Endothelial cell of umbilical vein (primary cell): ENCODE measurements at regions of chr12 and their contacts with region 1.

Region 1: DNA sequence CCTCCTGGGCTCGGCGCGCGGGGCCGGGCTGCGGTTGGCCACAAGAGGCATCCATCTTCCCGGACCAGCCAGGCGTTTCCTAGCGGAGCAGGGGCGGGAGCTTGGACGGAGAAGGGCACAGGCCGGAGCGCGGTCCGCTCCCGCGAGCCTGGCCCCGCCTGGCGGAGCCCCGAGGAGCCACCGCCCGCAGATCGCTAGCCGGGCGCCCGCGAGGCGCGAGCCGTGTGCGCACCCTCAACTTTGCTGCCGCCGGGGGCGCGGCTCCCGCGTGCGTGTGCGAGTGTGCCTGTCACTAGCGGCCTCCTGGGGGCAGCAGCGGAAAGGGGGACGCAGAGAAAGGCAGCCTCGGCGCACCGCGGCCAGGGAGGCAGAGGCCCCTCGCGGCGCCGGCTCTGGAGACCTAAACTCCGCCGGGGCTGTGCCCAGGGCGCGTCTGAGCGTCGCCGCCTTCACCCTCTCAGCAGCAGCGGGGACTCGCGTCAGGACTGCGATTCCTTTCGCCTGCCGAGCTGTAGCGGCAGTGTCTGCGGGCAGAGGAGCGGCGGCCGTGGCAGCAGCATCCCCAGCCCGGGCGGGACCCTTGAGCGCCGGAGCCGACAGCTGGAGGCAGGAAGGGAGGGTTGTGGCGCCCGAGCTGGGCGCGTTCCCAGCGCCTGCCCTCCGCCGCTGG is 644 bp upstream of the SRGAP1 start:
- DNase-seq: peak; percentile 97
- H3K4me3 ChIP-seq: peak overlapping the region; percentile 56 to 70 (median 63)
- H3K27ac ChIP-seq: peak overlapping the region; percentile 55
- H3K4me1 ChIP-seq: peaks cover 15% of the 10 kb centered on the region
- H3K27me3 ChIP-seq: no peaks in the 10 kb centered on the region
- CTCF ChIP-seq: peak; percentile 94 to 98
- POLR2A ChIP-seq: no peak

Region 2: DNA sequence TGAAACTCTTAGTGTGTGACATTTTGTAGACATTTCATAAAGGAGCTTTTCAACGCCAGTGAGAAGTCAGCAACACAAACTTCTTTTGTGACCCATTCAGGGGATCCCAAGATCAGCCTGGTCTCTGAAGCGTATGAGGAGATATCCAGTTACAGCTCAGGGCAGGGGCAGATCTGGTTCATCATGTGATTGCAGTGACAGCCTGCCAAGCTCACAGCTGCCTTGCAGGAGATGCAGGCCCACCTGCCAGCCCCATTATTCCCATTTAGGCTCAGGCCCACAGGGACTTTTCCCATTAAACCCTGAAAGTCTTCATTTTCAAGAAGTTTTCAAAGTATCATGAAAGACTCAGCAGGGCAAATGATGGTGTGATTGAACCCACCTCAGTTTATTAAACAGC is 39.0 kb after region 1 on chr12:
- CTCF ChIA-PET with region 1: no interaction called
- POLR2A ChIA-PET with region 1: no interaction called
- dilution Hi-C with region 1: no loop called
- intact Hi-C with region 1: no loop called
- DNase-seq: no peak
- H3K4me3 ChIP-seq: no peak overlapping the region
- H3K27ac ChIP-seq: no peak overlapping the region
- H3K4me1 ChIP-seq: no peaks in the 10 kb centered on the region
- H3K27me3 ChIP-seq: no peaks in the 10 kb centered on the region
- CTCF ChIP-seq: no peak
- POLR2A ChIP-seq: no peak

Region 3: DNA sequence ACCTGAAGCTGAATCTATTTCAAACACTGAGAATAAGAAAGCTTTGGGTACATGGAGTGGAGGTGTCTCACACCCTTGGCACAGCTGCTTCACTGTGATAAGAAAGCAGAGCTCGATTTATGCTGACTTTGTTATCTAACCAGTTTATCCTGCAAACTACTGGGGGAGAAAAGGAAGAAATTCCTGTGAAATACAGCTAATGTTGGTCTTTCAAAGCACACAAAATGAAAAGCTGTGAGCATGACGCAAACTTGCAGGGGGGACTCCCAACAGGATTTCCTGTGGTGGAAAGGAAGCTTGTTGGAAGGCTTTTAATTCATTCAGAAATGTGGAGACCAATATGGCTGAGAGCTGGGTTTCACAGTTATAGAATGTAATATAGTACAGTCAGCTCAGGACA is 54.1 kb after region 1 on chr12:
- CTCF ChIA-PET with region 1: interaction called, 20 read pairs
- POLR2A ChIA-PET with region 1: no interaction called
- dilution Hi-C with region 1: no loop called
- intact Hi-C with region 1: loop called (anchors 1 kb)
- DNase-seq: peak; percentile 92
- H3K4me3 ChIP-seq: peak overlapping the region in 1 of 3 experiments; percentile 63
- H3K27ac ChIP-seq: peak overlapping the region; percentile 96
- H3K4me1 ChIP-seq: peaks cover 16% of the 10 kb centered on the region
- H3K27me3 ChIP-seq: no peaks in the 10 kb centered on the region
- CTCF ChIP-seq: no peak
- POLR2A ChIP-seq: no peak

Region 4: DNA sequence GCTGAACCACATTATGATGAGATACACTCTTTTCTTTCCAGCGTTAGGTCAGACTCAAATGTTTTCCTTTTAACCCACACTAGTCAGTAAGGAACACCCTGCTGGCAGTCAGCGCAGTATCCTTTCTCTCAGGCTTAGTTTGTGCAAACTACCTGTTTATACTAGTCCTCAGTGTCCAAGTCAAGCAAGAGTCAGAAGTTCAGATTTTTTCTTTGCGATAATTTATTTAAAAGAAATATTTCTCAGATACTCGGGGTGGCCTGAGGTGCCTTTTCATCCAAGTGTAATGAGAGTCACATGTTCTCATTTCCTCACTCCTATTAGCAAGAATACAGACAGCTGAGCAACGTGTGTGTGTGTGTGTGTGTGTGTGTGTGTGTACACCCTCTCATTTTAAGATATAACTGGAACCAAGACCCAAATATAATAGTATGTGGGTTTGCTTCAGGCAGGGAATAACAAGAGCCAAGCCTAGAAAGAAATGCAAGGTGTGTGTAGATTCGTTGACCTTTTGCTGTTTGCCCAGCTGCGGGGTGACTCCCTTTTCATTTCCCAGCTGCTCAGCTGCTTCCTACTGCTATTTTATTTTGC is 195.5 kb after region 1 on chr12:
- CTCF ChIA-PET with region 1: interaction called, 9 read pairs
- POLR2A ChIA-PET with region 1: no interaction called
- dilution Hi-C with region 1: no loop called
- intact Hi-C with region 1: loop called (anchors 2 kb)
- DNase-seq: peak; percentile 80
- H3K4me3 ChIP-seq: no peak overlapping the region
- H3K27ac ChIP-seq: no peak overlapping the region
- H3K4me1 ChIP-seq: peaks cover 14% of the 10 kb centered on the region
- H3K27me3 ChIP-seq: no peaks in the 10 kb centered on the region
- CTCF ChIP-seq: no peak
- POLR2A ChIP-seq: no peak

Region 5: GRCh38 chr12:64099397-64099796 is 255.5 kb after region 1 on chr12:
- CTCF ChIA-PET with region 1: interaction called, 6 read pairs
- POLR2A ChIA-PET with region 1: no interaction called
- dilution Hi-C with region 1: no loop called
- intact Hi-C with region 1: loop called (anchors 1 kb)
- DNase-seq: peak; percentile 70
- H3K4me3 ChIP-seq: no peak overlapping the region
- H3K27ac ChIP-seq: no peak overlapping the region
- H3K4me1 ChIP-seq: no peaks in the 10 kb centered on the region
- H3K27me3 ChIP-seq: no peaks in the 10 kb centered on the region
- CTCF ChIP-seq: no peak
- POLR2A ChIP-seq: no peak

Region 6: GRCh38 chr12:64236549-64236948 is 392.7 kb after region 1 on chr12:
- CTCF ChIA-PET with region 1: interaction called, 57 read pairs
- POLR2A ChIA-PET with region 1: no interaction called
- dilution Hi-C with region 1: no loop called
- intact Hi-C with region 1: no loop called
- DNase-seq: peak; percentile 16
- H3K4me3 ChIP-seq: no peak overlapping the region
- H3K27ac ChIP-seq: no peak overlapping the region
- H3K4me1 ChIP-seq: no peaks in the 10 kb centered on the region
- H3K27me3 ChIP-seq: no peaks in the 10 kb centered on the region
- CTCF ChIP-seq: no peak
- POLR2A ChIP-seq: no peak